ENCODE measurements at regions of chr7 and their contacts with region 1.

Region 1: DNA sequence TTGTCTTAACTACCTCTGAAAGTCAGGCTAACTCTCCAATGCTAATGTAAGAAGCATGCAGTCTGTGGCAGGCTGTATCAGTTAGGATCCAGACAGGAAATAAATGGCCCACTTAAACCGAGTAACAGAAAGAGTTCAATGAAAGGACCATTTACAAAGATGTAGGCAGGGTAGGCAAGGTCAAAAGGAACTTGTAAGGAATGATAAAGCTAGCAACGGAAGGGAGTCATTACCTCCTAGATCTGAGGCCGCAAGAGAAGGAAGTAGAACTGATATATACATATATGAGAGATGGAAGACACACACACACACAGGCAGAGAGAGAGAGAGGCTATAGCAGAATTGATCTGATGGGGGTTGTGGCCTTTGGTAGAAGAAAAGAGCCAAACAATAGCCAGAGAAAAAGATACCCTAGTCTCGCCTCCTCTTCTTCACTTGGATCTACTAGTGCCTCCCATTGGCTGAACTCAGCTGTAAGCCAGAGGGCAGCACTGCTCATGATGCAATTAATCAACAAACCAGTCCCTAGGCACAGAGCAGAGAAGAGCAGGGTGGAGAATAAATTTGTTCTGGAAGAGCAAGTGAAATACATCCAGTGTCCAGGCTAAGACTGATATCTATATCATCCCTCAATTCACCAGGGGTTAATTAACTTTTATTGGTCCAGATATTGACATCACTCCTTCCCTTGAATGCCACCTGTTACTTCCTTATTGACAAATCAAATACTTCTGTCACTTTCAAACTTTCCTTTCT is 91.2 kb downstream of the LSMEM1 start:
- DNase-seq: peak; percentile 53
- H3K4me3 ChIP-seq: no peak overlapping the region
- H3K27ac ChIP-seq: peak overlapping the region; percentile 82
- H3K4me1 ChIP-seq: no peaks in the 10 kb centered on the region
- H3K27me3 ChIP-seq: no peaks in the 10 kb centered on the region
- CTCF ChIP-seq: peak; percentile 25

Region 2: GRCh38 chr7:112701451-112701850 is 129.4 kb after region 1 on chr7:
- intact Hi-C with region 1: loop called (anchors 5 kb)
- DNase-seq: peak; percentile 87
- H3K4me3 ChIP-seq: no peak overlapping the region
- H3K27ac ChIP-seq: peak overlapping the region; percentile 46
- H3K4me1 ChIP-seq: no peaks in the 10 kb centered on the region
- H3K27me3 ChIP-seq: no peaks in the 10 kb centered on the region
- CTCF ChIP-seq: no peak

Region 3: DNA sequence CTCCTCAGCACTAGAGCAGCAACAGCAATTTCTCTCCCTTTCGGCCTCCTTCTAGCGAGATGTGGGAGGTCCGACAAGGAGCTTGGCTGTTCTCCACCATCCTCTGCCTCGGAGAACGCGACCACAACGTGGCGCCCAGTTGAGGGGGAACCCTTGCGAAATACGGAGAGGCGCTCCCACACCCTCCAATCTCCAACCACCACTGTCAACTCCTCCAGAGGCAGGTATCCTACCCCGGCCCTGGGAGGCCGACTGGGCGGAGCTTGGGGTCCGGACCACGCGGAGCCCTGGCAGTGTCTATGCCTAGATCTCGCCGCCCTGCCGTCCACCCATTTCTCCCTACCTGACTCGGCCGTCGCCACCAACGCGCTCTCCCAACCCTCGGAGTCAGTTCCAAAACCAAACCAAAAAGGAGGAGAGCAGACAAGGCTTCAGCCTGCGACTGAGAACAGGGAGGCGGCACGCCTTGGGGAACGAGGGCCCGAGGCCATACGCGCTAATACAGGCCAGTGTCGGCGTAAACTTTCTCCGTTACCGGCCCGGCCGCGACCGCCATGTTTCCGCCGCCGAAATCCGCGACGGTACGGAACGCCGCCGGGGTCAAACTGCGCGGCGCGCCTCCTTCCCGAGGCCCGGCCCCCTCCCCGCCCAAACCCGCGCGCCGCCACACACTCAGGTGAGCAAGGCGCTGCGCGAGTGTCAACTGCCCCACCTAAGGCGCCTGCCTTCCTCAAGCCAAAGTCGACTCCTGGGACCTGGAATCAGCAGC is 218.0 kb after region 1 on chr7 and contains the start of gene TMEM168:
- intact Hi-C with region 1: loop called (anchors 10 kb)
- DNase-seq: peak; percentile 92
- H3K4me3 ChIP-seq: peak within 1 kb of the TSS; percentile 72
- H3K27ac ChIP-seq: peak within 1 kb of the TSS; percentile 83
- H3K4me1 ChIP-seq: peaks cover 3% of the 10 kb centered on the region
- H3K27me3 ChIP-seq: no peaks in the 10 kb centered on the region
- CTCF ChIP-seq: no peak
- total RNA-seq, gene TMEM168: 38.6 to 41.3 TPM